ENCODE measurements at regions of chr2 and their contacts with region 1.

Region 1: DNA sequence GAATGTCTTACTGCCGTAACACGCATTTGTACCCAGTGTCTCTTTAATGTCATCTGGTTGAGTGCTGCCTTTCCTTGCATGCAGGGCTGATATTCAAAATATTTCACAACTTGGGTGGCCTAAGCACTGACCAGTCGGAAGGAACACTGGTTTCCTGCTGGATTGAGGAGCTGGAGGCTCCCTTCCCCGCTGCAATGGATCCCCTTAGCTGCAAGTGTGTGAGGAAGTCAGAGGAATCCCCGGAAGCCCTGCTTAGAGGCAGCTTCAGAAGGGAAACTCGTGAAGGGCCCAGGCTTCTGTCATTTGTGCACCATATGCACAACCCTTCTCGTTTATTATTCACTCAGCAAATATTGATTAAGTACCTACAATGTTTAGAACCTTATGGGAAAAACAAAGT is 33.2 kb upstream of the SP3 start:
- H3K4me3 ChIP-seq: no peak overlapping the region
- H3K27ac ChIP-seq: no peak overlapping the region
- H3K4me1 ChIP-seq: no peaks in the 10 kb centered on the region
- CTCF ChIP-seq: no peak

Region 2: GRCh38 chr2:173965329-173966025 is 32.9 kb before region 1 on chr2 and contains the start of gene SP3:
- CTCF ChIA-PET with region 1: interaction called, 3 read pairs
- POLR2A ChIA-PET with region 1: interaction called, 10 read pairs
- H3K4me3 ChIP-seq: peak within 1 kb of the TSS; percentile 94
- H3K27ac ChIP-seq: peak within 1 kb of the TSS; percentile 99
- H3K4me1 ChIP-seq: peaks cover 4% of the 10 kb centered on the region; the same call in 1 of the 2 replicates
- CTCF ChIP-seq: peak; percentile 68

Measured in HEK293 (cell line).